Transverse colon (tissue), 4 donors: ENCODE measurements at regions of chr19 and their contacts with region 1.

Region 1: DNA sequence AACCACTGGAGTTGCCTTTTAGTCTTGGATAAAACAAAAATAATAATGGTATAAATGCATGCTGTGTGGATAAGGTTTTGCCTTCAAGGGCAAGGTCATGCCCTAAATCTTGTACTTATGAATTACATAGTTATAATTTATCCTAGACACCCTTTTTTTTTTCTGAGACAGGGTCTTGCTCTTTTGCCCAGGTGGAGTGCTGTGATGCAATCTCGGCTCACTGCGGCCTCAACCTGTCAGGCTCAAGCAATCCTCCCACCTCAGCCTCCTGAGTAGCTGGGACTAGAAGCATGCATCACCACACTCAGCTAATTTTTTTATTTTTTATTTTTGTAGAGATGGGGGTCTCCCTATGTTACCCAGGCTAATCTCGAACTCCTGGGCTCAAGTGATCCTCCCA is 7.7 kb upstream of the DACT3 start:
- DNase-seq: no peak
- H3K4me3 ChIP-seq: no peak overlapping the region
- H3K27ac ChIP-seq: no peak overlapping the region
- H3K4me1 ChIP-seq: no peaks in the 10 kb centered on the region
- H3K27me3 ChIP-seq: no peaks in the 10 kb centered on the region
- CTCF ChIP-seq: no peak
- EP300 ChIP-seq: no peak
- POLR2A ChIP-seq: no peak

Region 2: GRCh38 chr19:46614114-46614722 is 54.4 kb before region 1 on chr19:
- in situ Hi-C with region 1: loop called in 3 of 4 experiments (anchors 5 kb)
- intact Hi-C with region 1: loop called (anchors 2 kb)
- DNase-seq: peak; percentile 88
- H3K4me3 ChIP-seq: no peak overlapping the region
- H3K27ac ChIP-seq: no peak overlapping the region
- H3K4me1 ChIP-seq: peaks cover 0 to 42% (median 4%) of the 10 kb centered on the region in 4 donors
- H3K27me3 ChIP-seq: no peaks in the 10 kb centered on the region
- CTCF ChIP-seq: peak; percentile 86 to 91 (median 89)
- EP300 ChIP-seq: no peak
- POLR2A ChIP-seq: no peak